ENCODE measurements at regions of chr5 and their contacts with region 1.

Region 1: DNA sequence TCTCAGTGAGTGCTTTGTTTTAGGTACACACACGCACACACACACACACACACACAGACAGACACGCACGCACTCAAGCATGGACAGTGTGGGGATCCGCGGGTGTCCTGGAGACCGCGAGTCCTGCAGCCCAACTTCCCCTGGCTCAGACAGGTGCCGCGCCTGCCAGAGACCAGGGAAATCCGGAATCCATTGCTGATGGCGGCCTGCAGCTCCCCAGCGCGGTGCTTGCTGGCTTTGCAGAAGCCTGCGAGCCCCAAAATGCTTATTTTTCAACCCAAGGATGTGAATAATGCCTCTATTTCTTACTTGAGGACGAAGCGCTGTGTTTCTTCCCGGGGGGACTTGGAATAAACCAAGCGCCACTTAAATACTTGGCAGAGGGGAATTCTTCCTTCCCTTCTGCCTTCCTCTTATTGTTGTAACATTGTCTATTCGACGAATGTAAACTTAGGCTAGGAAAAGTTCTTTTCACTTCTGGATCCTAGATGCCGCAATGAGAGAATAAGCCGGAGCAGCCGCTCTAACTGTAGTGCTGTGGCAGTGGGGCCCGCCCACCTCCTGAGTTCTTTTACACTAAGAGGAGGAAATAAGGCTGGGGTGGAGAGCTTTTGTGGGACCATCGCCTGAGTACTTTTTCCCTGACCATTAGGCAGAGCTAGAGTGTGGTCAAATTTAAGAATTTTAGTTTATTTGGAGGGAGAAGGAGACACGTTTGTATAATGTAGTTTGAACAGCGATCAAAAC is 802 bp downstream of the ITGA2 start:
- DNase-seq: peak; percentile 3 to 72 (median 58)
- H3K4me3 ChIP-seq: peak overlapping the region; percentile 45 to 86 (median 70)
- H3K27ac ChIP-seq: peak overlapping the region; percentile 19 to 98 (median 88)
- H3K27me3 ChIP-seq: peaks cover 0 to 70% (median 35%) of the 10 kb centered on the region in 45 donors
- CTCF ChIP-seq: peak in 45 of 56 donors; percentile 11 to 60 (median 39)

Region 2: GRCh38 chr5:52342361-52342760 is 647.6 kb before region 1 on chr5:
- intact Hi-C with region 1: no loop called
- DNase-seq: no peak
- H3K4me3 ChIP-seq: no peak overlapping the region
- H3K27ac ChIP-seq: no peak overlapping the region
- H3K27me3 ChIP-seq: no peaks in the 10 kb centered on the region
- CTCF ChIP-seq: no peak

Region 3: GRCh38 chr5:52693280-52693679 is 296.7 kb before region 1 on chr5:
- intact Hi-C with region 1: no loop called
- DNase-seq: no peak
- H3K4me3 ChIP-seq: no peak overlapping the region
- H3K27ac ChIP-seq: no peak overlapping the region
- H3K27me3 ChIP-seq: peaks cover 0 to 4% (median 0%) of the 10 kb centered on the region in 45 donors
- CTCF ChIP-seq: peak in 48 of 56 donors; percentile 12 to 60 (median 40)

Region 4: DNA sequence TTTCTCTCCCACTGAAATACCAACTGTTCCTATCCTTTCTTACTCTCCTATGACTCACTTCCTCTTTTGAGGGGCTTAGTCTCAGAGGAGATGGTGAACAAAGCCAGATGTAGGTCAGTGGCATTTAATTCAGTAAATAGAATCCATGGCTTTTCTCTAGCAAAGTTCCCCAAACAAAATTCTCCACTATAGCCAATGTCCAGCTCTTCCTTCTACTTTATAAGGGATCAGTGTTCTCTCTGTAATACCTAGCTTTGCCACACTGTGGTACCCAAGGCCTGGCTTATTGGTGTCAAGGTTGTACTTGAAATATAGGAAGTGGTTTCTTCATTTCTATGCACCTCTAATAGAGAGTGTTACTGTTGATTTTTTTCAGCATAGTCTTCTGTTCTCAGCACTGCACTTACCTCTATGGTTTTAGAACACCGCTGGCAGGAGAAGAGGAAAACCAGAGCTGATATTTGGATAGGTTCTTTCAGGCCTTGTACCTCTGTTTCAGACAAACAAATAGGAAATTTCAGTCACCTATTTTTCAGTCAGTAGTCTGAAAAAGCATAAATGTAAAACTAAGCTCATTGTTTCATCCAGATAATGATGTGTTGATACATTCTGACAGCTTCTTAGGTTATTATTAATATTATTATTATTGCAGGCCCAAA is 41.4 kb before region 1 on chr5:
- intact Hi-C with region 1: loop called (anchors 2 to 5 kb)
- DNase-seq: peak in 7 of 10 donors; percentile 15 to 79 (median 44)
- H3K4me3 ChIP-seq: no peak overlapping the region
- H3K27ac ChIP-seq: peak overlapping the region in 10 of 59 donors; percentile 1 to 61 (median 23)
- H3K27me3 ChIP-seq: peaks cover 0 to 7% (median 0%) of the 10 kb centered on the region in 45 donors
- CTCF ChIP-seq: peak; percentile 55 to 93 (median 81)

Region 5: DNA sequence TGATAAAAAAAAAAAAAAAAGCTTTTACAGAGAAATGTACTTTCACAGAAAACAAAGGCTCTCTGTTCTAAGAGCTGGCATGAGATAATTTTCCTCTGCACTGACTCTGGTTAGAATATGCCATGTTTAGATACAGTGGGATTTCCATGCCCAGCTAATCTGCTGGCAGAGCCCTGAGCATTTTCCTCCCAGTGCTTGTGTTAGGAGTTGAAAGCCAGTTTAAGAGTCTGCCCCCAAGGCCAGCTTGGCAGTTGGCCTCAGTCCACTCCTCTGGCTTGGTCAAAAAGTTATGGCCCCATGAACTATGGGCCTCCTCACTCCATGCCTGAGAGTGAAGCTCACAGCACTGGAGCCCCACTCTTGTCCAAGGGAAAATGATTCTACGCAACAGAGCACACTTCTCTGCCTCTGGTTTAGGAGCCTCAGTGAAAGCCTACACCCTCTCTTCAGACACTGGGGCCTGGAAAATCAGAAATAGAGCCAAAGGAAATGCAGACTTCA is 97.7 kb after region 1 on chr5:
- intact Hi-C with region 1: loop called in 1 of 2 experiments (anchors 2 kb)
- DNase-seq: peak in 9 of 10 donors; percentile 24 to 69 (median 51)
- H3K4me3 ChIP-seq: no peak overlapping the region
- H3K27ac ChIP-seq: peak overlapping the region in 52 of 59 donors; percentile 11 to 92 (median 81)
- H3K27me3 ChIP-seq: no peaks in the 10 kb centered on the region
- CTCF ChIP-seq: peak in 13 of 56 donors; percentile 1 to 32 (median 14)

Region 6: DNA sequence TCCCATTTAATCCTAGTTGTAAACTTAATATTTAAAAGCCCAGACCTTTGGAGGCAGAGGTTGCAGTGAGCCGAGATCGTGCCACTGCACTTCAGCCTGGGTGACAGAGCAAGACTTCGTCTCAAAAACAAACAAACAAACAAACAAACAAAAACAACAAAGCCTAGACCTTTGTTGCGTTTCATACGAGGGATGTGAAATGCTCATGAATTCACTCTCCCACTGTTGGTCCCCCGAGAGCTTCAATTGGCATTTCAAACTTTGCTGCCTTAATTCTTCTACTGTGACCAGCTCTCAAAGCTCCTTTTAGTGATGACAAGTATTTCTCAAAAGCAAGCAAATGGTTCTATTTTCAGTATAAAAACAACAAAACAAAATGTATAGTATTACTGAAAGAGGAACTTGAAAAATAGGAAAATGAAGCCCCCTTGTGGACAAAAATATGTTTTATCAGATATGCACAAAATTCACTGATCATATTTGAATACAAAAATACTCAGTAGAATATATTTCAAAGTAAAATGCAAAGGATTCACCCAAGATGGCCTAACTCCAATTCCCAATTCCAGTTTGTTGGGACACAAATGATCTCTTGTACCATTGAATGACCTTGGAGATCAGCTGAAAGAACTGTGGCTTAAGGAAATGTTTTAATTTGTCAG is 1855.1 kb after region 1 on chr5:
- intact Hi-C with region 1: loop called in 1 of 2 experiments (anchors 10 kb)
- DNase-seq: no peak
- H3K4me3 ChIP-seq: peak overlapping the region in 57 of 59 donors; percentile 4 to 65 (median 40)
- H3K27ac ChIP-seq: peak overlapping the region in 41 of 59 donors; percentile 2 to 76 (median 48)
- H3K27me3 ChIP-seq: no peaks in the 10 kb centered on the region
- CTCF ChIP-seq: peak; percentile 64 to 95 (median 79)